GM10248 (cell line): ENCODE measurements at regions of chr12 and their contacts with region 1.

Region 1: DNA sequence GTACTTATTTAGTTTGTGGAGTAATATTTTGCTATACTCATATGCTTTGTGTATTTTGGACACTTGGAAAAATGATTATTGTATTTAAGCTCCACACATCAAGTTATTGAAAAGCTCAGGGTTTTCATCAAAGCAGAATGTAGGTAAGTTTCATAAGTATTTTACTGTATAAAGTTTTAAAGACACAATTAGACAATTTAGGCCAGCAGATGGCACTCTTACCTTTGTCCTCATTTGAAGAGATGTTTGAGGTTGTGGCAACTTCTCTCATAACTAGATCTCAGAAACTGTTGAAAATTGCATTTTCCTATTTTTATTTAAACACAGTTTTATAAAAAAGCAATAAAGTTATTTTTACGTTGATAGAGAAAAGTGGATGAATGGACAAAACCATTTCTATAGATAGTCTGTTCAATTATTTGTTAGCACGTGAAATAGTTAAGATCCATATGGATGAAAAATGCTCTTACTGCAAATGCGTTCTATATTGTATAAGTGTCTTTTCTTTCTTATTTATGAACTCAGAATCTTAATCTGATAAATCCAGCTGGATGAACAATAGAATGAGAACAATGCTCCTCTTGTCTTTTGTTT is 300.0 kb downstream of the AEBP2 start:
- DNase-seq: peak; percentile 45
- CTCF ChIP-seq: peak; percentile 59

Region 2: DNA sequence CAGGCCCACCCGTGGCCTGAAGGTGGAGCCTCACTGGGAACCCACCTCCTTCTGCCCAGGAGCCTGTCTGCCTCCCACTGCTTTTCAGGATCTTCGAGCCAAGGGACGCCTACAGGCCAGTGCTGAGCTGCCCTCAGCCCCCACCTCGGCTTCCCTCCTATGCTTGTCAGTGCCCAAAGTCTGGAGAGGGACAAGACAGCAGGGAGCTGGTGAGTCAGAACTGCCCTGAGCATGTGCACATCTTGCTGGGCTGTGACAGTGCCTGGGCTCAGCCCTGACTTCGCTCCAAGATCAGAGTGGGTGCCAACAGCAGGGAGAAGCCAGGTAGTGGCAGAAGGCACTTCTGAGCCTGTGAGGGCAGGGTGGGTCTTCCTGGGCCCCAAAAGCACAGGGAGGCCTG is 13.2 kb before region 1 on chr12:
- CTCF ChIA-PET with region 1: interaction called, 12 read pairs
- POLR2A ChIA-PET with region 1: no interaction called
- DNase-seq: no peak
- CTCF ChIP-seq: no peak

Region 3: DNA sequence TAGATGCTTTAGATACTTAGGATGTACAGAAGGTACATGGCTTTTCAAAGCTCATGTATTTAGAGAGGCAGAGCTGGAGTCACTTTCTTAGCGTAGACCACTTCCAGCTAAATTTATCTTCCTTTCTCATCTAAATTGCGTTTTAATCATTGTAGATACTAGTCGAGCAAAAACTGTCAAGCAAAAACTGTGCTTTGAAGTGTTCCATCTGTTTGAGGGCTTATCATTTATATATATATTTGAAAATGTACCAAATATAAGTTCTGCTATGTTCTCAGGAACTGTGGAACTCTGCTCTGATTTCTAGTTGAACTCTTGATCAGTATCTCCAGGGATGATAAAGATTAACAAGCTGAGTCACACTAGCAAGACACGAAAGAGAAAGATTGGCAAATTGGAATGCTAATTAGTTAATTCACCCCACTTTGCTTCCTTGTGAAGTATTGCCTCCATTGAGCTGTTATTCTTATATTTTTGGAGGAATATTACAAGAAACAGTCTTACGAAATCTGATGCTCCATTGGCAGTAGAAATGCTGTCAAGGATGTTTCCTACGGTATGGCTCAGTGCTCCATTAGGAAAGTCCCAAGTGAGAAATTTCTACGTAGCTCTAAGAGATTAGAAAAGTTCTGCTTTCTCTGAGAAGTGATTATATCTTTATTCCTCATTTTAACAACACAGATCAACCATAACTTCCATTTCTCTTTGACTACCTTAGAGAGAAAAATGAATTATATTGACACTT is 10.8 kb after region 1 on chr12:
- CTCF ChIA-PET with region 1: interaction called, 16 read pairs
- POLR2A ChIA-PET with region 1: no interaction called
- DNase-seq: no peak
- CTCF ChIP-seq: no peak

Region 4: GRCh38 chr12:19757317-19757877 is 18.1 kb after region 1 on chr12:
- CTCF ChIA-PET with region 1: interaction called, 11 read pairs
- POLR2A ChIA-PET with region 1: no interaction called
- DNase-seq: no peak
- CTCF ChIP-seq: peak; percentile 54